ENCODE measurements at regions of chr22 and their contacts with region 1.

Region 1: DNA sequence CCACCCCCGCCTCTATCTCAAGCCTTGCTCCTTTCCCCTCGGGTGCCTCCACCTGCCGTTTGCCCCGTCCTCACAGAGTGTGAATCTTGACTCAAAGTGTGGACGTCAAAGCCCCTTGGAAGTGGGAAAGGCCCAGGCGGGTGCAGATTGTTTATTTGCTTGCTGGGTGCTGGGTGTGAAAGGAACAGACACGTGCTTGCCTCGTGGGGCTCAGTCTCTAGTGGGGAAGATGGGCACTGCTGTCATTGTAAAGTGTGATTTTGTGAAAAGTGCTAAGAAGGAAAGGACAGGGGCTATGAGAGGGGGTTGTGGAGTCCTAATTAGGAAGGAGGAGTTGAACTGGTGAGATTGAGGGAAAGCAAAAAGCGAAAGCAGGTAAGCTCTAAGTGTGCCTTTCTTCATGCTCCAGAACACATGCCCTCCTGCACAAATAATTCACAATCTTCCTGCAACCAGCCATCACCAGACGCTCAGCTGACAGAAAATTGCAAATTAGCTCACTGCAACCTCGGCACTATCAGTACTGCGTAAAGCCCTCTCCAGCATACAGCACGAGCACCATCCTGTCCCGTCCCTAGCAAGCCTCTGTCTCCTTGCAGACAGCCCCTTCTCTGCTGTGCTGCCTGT is 9.7 kb upstream of the GCAT start:
- DNase-seq: no peak
- H3K4me3 ChIP-seq: no peak overlapping the region
- H3K27ac ChIP-seq: no peak overlapping the region
- H3K4me1 ChIP-seq: peaks cover 12% of the 10 kb centered on the region
- H3K27me3 ChIP-seq: no peaks in the 10 kb centered on the region
- CTCF ChIP-seq: no peak

Region 2: GRCh38 chr22:37643225-37643847 is 154.7 kb before region 1 on chr22:
- intact Hi-C with region 1: loop called (anchors 10 kb)
- DNase-seq: peak; percentile 87
- H3K4me3 ChIP-seq: no peak overlapping the region
- H3K27ac ChIP-seq: no peak overlapping the region
- H3K4me1 ChIP-seq: peaks cover 34% of the 10 kb centered on the region
- H3K27me3 ChIP-seq: peaks cover 16% of the 10 kb centered on the region
- CTCF ChIP-seq: peak; percentile 97